ENCODE measurements at regions of chr6 and their contacts with region 1.

Region 1: GRCh38 chr6:15491255-15491985 is 171.4 kb downstream of the DTNBP1 start:
- DNase-seq: peak; percentile 95
- H3K4me3 ChIP-seq: no peak overlapping the region
- H3K27ac ChIP-seq: peak overlapping the region; percentile 1 to 50 (median 34)
- H3K4me1 ChIP-seq: peaks cover 31 to 50% (median 36%) of the 10 kb centered on the region in 4 donors
- H3K27me3 ChIP-seq: no peaks in the 10 kb centered on the region
- CTCF ChIP-seq: peak; percentile 86 to 97 (median 95)
- EP300 ChIP-seq: no peak
- POLR2A ChIP-seq: no peak

Region 2: DNA sequence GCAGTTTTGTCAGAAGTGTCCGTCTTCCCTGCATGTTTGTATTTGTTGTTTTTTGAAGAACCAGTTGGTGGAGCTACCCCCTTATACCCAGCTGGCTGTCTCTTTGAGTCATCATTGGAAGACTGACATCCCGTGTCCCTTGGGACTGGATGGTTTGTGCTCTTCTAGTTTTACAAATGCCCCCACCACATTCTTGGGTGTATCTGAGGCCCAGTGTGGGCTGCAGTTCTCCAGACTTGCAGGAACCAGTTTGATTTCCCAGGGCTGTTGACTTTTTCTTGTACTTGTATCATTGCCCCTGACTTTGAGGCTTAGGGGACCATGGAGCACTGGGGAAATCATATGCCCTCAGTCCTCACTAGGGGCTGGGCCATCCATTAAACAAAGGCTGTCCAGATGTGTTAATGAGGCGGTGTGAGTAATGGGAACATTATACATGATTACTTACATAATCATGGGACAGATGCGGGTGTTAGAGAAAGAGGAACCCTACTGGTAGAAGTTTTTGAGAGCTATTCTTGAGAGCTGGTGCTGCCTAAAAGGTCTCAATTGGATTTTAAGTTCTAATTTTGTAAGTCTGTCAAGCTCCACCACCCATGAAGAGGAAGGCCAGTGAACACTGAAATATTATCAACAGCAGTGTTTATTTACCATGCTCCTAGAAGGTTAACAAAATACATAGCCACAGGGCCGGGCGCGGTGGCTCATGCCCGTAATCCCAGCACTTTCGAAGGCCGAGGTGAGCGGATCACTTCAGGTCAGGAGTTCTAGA is 237.2 kb before region 1 on chr6:
- intact Hi-C with region 1: loop called (anchors 5 kb)
- DNase-seq: no peak
- H3K4me3 ChIP-seq: no peak overlapping the region
- H3K27ac ChIP-seq: no peak overlapping the region
- H3K4me1 ChIP-seq: peaks cover 39 to 66% (median 53%) of the 10 kb centered on the region in 4 donors
- H3K27me3 ChIP-seq: no peaks in the 10 kb centered on the region
- CTCF ChIP-seq: no peak
- EP300 ChIP-seq: no peak
- POLR2A ChIP-seq: no peak

Region 3: GRCh38 chr6:15399641-15400470 is 91.6 kb before region 1 on chr6:
- intact Hi-C with region 1: no loop called
- DNase-seq: peak; percentile 94
- H3K4me3 ChIP-seq: peak overlapping the region; percentile 46 to 54 (median 52)
- H3K27ac ChIP-seq: peak overlapping the region; percentile 44 to 73 (median 67)
- H3K4me1 ChIP-seq: peaks cover 53 to 60% (median 57%) of the 10 kb centered on the region in 4 donors
- H3K27me3 ChIP-seq: no peaks in the 10 kb centered on the region
- CTCF ChIP-seq: no peak
- EP300 ChIP-seq: no peak
- POLR2A ChIP-seq: no peak

Region 4: DNA sequence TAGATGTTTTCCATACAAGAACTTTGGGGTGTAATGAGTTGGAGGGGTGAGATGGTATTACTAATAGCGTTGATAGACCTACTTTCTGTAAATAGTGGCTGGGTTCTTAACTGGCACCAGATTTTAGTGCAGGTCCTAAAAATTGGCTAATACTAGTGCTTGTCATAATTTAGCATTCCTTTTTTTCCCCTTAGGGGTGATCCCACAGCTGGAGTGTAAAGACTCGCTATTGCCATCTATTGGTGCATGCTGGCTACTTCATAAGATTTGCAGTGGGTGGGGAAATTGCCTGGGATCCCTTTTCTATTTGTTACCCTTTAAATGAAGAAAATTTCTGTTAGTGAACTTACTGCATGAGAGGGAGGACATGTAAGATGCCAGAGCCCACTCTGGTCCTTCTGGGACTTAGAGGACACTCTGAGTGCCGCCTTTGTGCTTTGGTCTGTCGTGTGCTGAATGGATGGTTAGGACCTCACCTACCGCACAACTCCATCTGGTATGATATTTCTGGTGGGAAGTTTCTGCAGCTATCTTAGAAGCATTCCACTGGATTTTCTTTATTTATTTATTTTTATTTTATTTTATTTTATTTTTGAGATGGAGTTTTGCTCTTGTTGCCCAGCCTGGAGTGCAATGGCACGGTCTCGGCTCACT is 50.1 kb before region 1 on chr6:
- intact Hi-C with region 1: loop called (anchors 5 kb)
- DNase-seq: no peak
- H3K4me3 ChIP-seq: no peak overlapping the region
- H3K27ac ChIP-seq: no peak overlapping the region
- H3K4me1 ChIP-seq: peaks cover 49 to 72% (median 62%) of the 10 kb centered on the region in 4 donors
- H3K27me3 ChIP-seq: no peaks in the 10 kb centered on the region
- CTCF ChIP-seq: peak; percentile 74 to 84 (median 78)
- EP300 ChIP-seq: no peak
- POLR2A ChIP-seq: no peak

Region 5: DNA sequence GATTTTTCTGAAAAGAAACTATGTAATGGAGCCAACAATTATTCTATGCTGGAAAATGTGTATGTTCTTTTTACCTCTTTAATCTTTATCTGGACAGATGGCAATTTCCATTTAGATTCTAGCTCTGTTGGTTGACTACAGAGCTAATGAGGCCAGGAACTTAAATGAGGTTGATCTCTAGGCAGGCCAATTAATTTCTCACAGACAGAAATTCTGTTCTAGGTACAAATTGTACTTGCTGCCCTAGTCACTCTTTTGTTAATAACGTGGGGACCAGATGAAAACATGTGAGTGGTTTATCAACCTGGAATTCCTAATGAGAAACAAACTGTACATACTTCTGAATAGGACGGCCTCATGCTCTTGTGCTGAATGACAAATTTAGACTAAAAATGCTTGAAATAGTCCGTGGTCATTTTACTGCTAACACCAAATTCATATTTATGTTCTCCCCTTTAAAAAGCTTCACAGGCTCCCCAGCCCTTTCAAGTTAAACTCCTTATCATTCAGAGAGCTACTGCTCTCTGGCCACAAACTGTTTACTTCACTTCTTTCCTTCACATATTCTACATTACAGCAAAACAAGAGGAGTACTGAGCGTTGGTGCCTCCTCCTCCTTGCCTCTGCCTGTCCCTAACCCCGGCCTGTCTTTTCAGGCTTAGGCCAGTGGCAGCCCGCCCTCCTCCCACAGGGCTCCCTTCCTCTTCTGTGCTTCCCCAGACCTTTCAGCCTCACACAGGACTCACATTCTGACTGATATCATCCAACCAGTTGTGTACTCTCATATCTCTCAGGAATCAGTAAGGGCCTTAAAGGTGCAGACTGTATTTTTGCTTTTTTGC is 130.0 kb after region 1 on chr6:
- intact Hi-C with region 1: loop called (anchors 5 kb)
- DNase-seq: no peak
- H3K4me3 ChIP-seq: no peak overlapping the region
- H3K27ac ChIP-seq: peak overlapping the region; percentile 41 to 69 (median 63)
- H3K4me1 ChIP-seq: peaks cover 31 to 37% (median 33%) of the 10 kb centered on the region in 4 donors
- H3K27me3 ChIP-seq: no peaks in the 10 kb centered on the region
- CTCF ChIP-seq: no peak
- EP300 ChIP-seq: peak; percentile 5
- POLR2A ChIP-seq: no peak

Region 6: DNA sequence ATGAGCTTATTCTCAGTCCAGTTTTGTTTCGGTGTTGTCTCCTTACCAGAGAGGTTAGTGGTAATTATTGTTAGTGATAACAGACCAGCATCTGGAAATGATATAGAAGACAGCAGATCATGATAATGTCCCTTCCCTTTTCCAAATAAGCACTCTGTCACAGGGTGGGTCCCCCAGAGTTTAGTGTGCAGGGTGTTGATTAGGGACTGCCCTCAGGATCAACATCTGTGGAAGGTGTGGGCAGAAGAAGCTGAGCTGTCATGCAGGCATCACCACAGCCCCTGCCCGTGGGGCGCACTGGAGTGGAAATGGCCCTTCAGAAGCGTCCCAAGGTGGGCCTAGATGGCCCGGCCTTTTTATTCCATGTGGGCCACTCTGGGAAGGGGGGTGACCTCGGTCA is 239.0 kb after region 1 on chr6:
- intact Hi-C with region 1: no loop called
- DNase-seq: no peak
- H3K4me3 ChIP-seq: no peak overlapping the region
- H3K27ac ChIP-seq: no peak overlapping the region
- H3K4me1 ChIP-seq: no peaks in the 10 kb centered on the region
- H3K27me3 ChIP-seq: peaks cover 0 to 3% (median 0%) of the 10 kb centered on the region in 4 donors
- CTCF ChIP-seq: no peak
- EP300 ChIP-seq: no peak
- POLR2A ChIP-seq: no peak

Measured in esophagus muscularis mucosa (tissue), 4 donors.